ENCODE measurements at regions of chr12 and their contacts with region 1.

Region 1: GRCh38 chr12:49945394-49946080 is 5.0 kb upstream of the AQP2 start:
- DNase-seq: peak; percentile 55
- H3K27ac ChIP-seq: no peak overlapping the region
- CTCF ChIP-seq: peak; percentile 67

Region 2: GRCh38 chr12:49503674-49504180 is 441.8 kb before region 1 on chr12:
- CTCF ChIA-PET with region 1: no interaction called
- POLR2A ChIA-PET with region 1: no interaction called
- DNase-seq: peak; percentile 85
- H3K27ac ChIP-seq: peak overlapping the region; percentile 94
- CTCF ChIP-seq: no peak

Region 3: GRCh38 chr12:49866859-49867579 is 78.5 kb before region 1 on chr12:
- CTCF ChIA-PET with region 1: interaction called, 12 read pairs
- POLR2A ChIA-PET with region 1: no interaction called
- DNase-seq: peak; percentile 84
- H3K27ac ChIP-seq: peak overlapping the region; percentile 57
- CTCF ChIP-seq: peak; percentile 93

Region 4: DNA sequence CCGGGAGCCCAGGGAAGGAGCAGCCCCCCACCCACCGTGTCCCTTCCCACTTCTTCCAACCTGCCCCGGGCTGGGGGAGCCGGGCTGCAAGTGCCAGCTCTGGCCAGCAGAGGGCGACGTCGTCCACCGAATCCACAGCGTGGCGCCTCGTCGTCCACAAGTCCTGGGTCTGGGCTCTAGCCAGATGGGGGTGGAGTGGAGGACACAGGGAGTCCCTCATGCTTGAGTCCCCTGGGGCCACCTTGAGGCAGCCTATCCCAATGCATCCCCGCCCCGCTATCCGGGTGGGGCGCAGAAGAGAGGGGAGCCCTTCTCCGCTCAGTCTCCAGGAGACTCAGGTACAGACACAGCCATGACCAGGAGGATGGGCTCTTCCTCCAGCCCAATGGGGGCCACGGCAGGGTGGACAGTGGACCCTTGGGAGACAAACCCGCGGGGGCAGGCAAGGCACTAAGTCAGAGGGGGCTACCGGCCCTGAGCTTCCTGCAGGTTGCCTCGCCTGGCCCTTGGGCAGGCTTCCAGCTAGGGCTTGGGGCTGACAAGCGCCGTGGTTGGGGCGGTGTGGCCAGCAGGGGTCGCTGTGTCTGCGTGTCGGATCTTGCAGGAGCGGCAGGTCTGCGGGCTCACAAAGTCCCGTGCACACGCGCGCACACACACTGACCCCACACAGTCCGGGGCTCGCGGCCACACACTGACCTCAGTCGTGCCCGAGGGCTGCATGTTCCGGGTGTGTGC is 21.7 kb after region 1 on chr12:
- CTCF ChIA-PET with region 1: interaction called, 10 read pairs
- POLR2A ChIA-PET with region 1: interaction called, 7 read pairs
- DNase-seq: peak; percentile 82
- H3K27ac ChIP-seq: no peak overlapping the region
- CTCF ChIP-seq: peak; percentile 92

Region 5: GRCh38 chr12:50003595-50003994 is 58.1 kb after region 1 on chr12:
- CTCF ChIA-PET with region 1: no interaction called
- POLR2A ChIA-PET with region 1: no interaction called
- DNase-seq: no peak
- H3K27ac ChIP-seq: no peak overlapping the region
- CTCF ChIP-seq: no peak

Measured in RWPE1 (cell line).